PC-9 (cell line): ENCODE measurements at regions of chr6 and their contacts with region 1.

Region 1: GRCh38 chr6:145028144-145028818 is 707.0 kb downstream of the EPM2A start:
- DNase-seq: peak; percentile 19 to 69
- H3K4me3 ChIP-seq: no peak overlapping the region
- H3K27ac ChIP-seq: no peak overlapping the region
- H3K4me1 ChIP-seq: peaks cover 8% of the 10 kb centered on the region
- H3K27me3 ChIP-seq: no peaks in the 10 kb centered on the region
- CTCF ChIP-seq: peak; percentile 65

Region 2: DNA sequence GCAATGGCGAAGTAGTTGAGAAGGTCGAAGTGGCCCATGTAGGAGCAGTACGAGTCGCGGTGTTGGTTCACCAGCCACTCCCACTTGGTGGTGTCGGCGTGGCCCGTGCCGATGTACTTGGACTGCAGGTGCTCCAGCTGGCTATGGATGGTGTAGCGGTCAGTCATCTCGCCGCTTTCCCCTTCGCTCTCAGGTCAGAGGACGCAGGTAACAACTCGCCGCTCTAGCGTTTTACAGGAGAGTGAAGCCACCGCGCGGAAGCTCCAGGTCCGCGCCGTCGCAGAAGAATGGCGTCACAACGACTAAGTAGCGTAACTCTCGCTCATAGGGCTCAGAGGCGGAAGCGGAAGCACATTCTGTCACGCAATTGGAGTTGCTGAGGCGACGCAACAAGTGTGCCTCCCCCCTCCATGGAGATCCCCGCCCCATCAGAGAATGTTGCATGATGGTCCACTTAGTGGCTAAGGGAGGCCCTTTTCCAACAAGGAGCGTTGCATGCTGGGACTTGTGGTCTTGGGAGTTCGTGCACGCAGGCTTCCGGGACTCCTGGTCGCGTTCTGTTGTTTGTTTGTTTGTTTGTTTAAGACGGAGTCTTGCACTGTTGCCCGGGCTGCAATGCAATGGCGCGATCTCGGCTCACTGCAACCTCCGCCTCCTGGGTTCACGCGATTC is 932.8 kb before region 1 on chr6 and contains the start of gene SF3B5:
- CTCF ChIA-PET with region 1: no interaction called
- POLR2A ChIA-PET with region 1: no interaction called
- intact Hi-C with region 1: loop called (anchors 10 kb)
- DNase-seq: peak; percentile 95 to 99
- H3K4me3 ChIP-seq: peak within 1 kb of the TSS; percentile 68
- H3K27ac ChIP-seq: peak within 1 kb of the TSS; percentile 73
- H3K4me1 ChIP-seq: peaks cover 17% of the 10 kb centered on the region; the same call in 1 of the 2 replicates
- H3K27me3 ChIP-seq: no peaks in the 10 kb centered on the region
- CTCF ChIP-seq: no peak
- total RNA-seq, gene SF3B5: 125 and 127 TPM in 2 replicates

Region 3: GRCh38 chr6:144582939-144583613 is 445.2 kb before region 1 on chr6:
- CTCF ChIA-PET with region 1: no interaction called
- POLR2A ChIA-PET with region 1: no interaction called
- intact Hi-C with region 1: loop called (anchors 1 kb)
- DNase-seq: no peak
- H3K4me3 ChIP-seq: no peak overlapping the region
- H3K27ac ChIP-seq: no peak overlapping the region
- H3K4me1 ChIP-seq: no peaks in the 10 kb centered on the region
- H3K27me3 ChIP-seq: no peaks in the 10 kb centered on the region
- CTCF ChIP-seq: no peak

Region 4: GRCh38 chr6:144797881-144798595 is 230.2 kb before region 1 on chr6:
- CTCF ChIA-PET with region 1: no interaction called
- POLR2A ChIA-PET with region 1: no interaction called
- intact Hi-C with region 1: loop called (anchors 10 kb)
- DNase-seq: peak; percentile 13 to 92
- H3K4me3 ChIP-seq: no peak overlapping the region
- H3K27ac ChIP-seq: peak overlapping the region; percentile 37
- H3K4me1 ChIP-seq: peaks cover 30% of the 10 kb centered on the region
- H3K27me3 ChIP-seq: no peaks in the 10 kb centered on the region
- CTCF ChIP-seq: no peak

Region 5: GRCh38 chr6:144886682-144887081 is 141.6 kb before region 1 on chr6:
- CTCF ChIA-PET with region 1: no interaction called
- POLR2A ChIA-PET with region 1: no interaction called
- intact Hi-C with region 1: no loop called
- DNase-seq: no peak
- H3K4me3 ChIP-seq: no peak overlapping the region
- H3K27ac ChIP-seq: no peak overlapping the region
- H3K4me1 ChIP-seq: no peaks in the 10 kb centered on the region
- H3K27me3 ChIP-seq: no peaks in the 10 kb centered on the region
- CTCF ChIP-seq: no peak

Region 6: GRCh38 chr6:144931172-144932035 is 96.9 kb before region 1 on chr6:
- CTCF ChIA-PET with region 1: no interaction called
- POLR2A ChIA-PET with region 1: no interaction called
- intact Hi-C with region 1: loop called (anchors 2 kb)
- DNase-seq: peak; percentile 30 to 49
- H3K4me3 ChIP-seq: no peak overlapping the region
- H3K27ac ChIP-seq: no peak overlapping the region
- H3K4me1 ChIP-seq: 0 out of 2 replicates have a peak, but pooled peaks cover 11% of the 10 kb centered on the region
- H3K27me3 ChIP-seq: no peaks in the 10 kb centered on the region
- CTCF ChIP-seq: peak; percentile 78

Region 7: GRCh38 chr6:144953552-144954240 is 74.6 kb before region 1 on chr6:
- CTCF ChIA-PET with region 1: no interaction called
- POLR2A ChIA-PET with region 1: no interaction called
- intact Hi-C with region 1: loop called (anchors 1 kb)
- DNase-seq: peak; percentile 76 to 79
- H3K4me3 ChIP-seq: no peak overlapping the region
- H3K27ac ChIP-seq: peak overlapping the region; percentile 37; the same call in 1 of the 2 replicates
- H3K4me1 ChIP-seq: peaks cover 22% of the 10 kb centered on the region
- H3K27me3 ChIP-seq: no peaks in the 10 kb centered on the region
- CTCF ChIP-seq: no peak

Region 8: DNA sequence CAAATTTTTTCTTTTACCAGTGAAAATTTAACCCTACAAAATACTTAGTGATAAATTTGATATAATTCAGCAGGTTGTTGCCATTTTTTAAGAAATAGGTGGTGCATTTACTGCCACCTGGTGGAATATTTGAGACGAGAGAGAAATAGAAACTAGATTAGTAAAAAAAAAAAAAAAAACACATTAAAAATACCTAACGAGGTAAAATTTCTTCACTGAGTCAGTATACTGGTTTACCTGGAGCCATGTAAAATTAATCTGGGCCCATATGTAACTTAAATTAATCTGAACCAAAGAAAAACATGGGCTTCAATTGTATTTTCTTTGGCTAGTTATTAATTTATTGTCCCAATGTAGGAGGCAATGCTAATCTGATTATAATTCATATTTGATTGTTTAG is 186.3 kb after region 1 on chr6:
- CTCF ChIA-PET with region 1: no interaction called
- POLR2A ChIA-PET with region 1: no interaction called
- intact Hi-C with region 1: loop called (anchors 1 kb)
- DNase-seq: no peak
- H3K4me3 ChIP-seq: no peak overlapping the region
- H3K27ac ChIP-seq: no peak overlapping the region
- H3K4me1 ChIP-seq: no peaks in the 10 kb centered on the region
- H3K27me3 ChIP-seq: no peaks in the 10 kb centered on the region
- CTCF ChIP-seq: peak; percentile 79

Region 9: GRCh38 chr6:145267076-145267867 is 239.0 kb after region 1 on chr6:
- CTCF ChIA-PET with region 1: no interaction called
- POLR2A ChIA-PET with region 1: no interaction called
- intact Hi-C with region 1: no loop called
- DNase-seq: no peak
- H3K4me3 ChIP-seq: no peak overlapping the region
- H3K27ac ChIP-seq: no peak overlapping the region
- H3K4me1 ChIP-seq: peaks cover 11% of the 10 kb centered on the region
- H3K27me3 ChIP-seq: no peaks in the 10 kb centered on the region
- CTCF ChIP-seq: no peak